Dendritic cell treated with granulocyte-macrophage colony-stimulating factor and Interleukin-4, amounts not matched to agents 40 ng/mL and 50 ng/mL, for 4 days (primary cell): ENCODE measurements at regions of chr6 and their contacts with region 1.

Region 1: GRCh38 chr6:56699066-56699654 is 56.5 kb upstream of the DST start:
- H3K4me3 Mint-ChIP-seq: no peak overlapping the region
- H3K27ac Mint-ChIP-seq: no peak overlapping the region
- H3K4me1 Mint-ChIP-seq: peaks cover 22% of the 10 kb centered on the region
- H3K27me3 Mint-ChIP-seq: no peaks in the 10 kb centered on the region

Region 2: DNA sequence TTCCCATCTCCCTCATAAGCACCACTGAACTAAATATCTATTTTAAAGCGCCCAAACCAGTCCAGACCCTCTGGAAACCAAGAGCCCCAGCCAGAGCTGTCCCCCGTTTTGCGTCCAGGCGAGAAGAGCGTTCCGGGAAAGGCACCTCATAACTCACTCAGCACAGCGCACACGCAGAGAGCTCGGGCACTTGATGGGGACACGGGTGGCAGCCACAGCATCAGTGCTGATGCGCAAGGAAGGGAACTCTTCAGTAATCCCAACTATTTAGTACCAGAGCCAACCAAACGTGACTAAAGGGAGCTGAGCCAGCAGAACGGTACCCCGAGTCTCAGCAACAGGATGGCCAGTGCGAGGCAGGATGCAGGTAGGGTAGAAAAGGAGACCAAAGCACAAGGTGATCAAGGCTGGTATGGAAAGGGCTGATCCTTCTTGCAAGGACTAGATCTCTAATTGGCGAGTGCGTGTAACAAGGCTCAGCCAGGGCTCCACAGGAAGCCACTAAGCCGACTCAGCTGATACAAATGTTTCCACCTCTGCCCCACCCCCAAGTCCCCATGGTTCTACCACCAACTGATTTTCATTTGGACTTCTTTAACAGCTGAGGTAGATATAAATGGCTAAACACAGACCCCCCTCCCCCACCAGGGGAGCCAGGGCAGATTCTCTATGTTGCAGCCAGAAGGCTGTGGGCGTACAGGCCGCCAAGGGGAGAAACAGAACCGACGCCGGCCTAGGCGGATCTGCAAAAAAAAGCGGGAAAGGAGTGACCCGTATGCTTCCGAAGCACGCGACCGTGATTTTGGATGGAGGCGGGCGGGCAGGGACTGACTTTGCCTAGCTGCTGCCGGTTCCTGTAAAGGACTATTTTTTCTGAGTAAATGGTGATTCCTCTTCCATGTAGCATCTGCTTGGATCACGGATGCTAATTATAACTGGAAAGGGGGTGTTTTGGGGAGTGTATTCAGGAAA is 268.2 kb before region 1 on chr6:
- intact Hi-C with region 1: no loop called
- H3K4me3 Mint-ChIP-seq: no peak overlapping the region
- H3K27ac Mint-ChIP-seq: no peak overlapping the region
- H3K4me1 Mint-ChIP-seq: no peaks in the 10 kb centered on the region
- H3K27me3 Mint-ChIP-seq: peaks cover 8% of the 10 kb centered on the region

Region 3: GRCh38 chr6:56637640-56638039 is 61.5 kb before region 1 on chr6:
- intact Hi-C with region 1: loop called (anchors 1 kb)
- H3K4me3 Mint-ChIP-seq: no peak overlapping the region
- H3K27ac Mint-ChIP-seq: no peak overlapping the region
- H3K4me1 Mint-ChIP-seq: no peaks in the 10 kb centered on the region
- H3K27me3 Mint-ChIP-seq: no peaks in the 10 kb centered on the region

Region 4: GRCh38 chr6:56955171-56956045 is 256.2 kb after region 1 on chr6:
- intact Hi-C with region 1: no loop called
- H3K4me3 Mint-ChIP-seq: peak overlapping the region; percentile 57
- H3K27ac Mint-ChIP-seq: no peak overlapping the region
- H3K4me1 Mint-ChIP-seq: peaks cover 17% of the 10 kb centered on the region
- H3K27me3 Mint-ChIP-seq: peaks cover 36% of the 10 kb centered on the region